ENCODE measurements at regions of chr9 and their contacts with region 1.

Region 1: GRCh38 chr9:6049798-6050197 is 34.4 kb upstream of the RANBP6 start:
- DNase-seq: no peak
- H3K4me3 ChIP-seq: no peak overlapping the region
- H3K27ac ChIP-seq: no peak overlapping the region
- H3K4me1 ChIP-seq: no peaks in the 10 kb centered on the region
- H3K27me3 ChIP-seq: no peaks in the 10 kb centered on the region
- CTCF ChIP-seq: no peak
- EP300 ChIP-seq: no peak
- POLR2A ChIP-seq: no peak

Region 2: DNA sequence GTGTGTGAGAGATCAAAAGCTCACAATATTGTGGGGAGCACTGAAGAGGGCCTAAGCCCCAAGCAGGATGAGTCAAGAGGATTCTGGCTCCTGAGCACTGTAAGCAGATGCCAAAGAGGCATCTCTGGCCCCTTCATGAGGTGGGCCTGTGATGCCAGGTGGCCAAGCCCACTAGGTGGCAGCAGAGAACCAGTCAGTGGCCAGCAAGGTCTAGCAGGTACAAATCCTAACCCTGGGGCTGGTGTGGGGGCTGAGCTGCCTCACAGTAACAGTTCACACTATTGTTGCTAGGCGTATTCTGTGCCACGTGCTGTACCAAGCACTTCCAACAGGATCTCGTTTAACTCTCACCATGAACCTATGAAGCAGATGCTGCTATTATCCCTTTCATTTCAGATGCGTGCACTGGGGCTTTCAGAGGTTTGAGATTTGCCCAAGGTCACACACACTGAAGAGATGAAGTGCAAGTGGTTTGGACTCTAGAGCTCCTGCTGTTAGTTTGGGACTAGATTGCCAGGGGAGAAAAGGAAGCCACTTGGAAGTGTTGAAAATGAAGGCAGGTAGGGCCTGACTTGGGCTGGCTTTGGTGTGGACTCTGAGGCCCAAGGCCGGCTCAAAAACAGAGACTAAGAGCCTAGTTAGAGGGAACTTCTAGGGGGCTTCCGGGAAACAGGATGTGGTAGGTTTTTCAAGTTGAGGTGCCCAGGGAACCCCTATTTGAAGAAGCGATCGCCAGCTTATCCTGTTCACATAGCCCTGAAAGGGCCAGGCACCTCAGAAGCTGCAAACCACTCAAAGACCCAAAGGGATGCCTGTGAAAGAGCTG is 163.5 kb before region 1 on chr9:
- intact Hi-C with region 1: loop called (anchors 5 to 10 kb)
- DNase-seq: peak; percentile 62 to 83 (median 79)
- H3K4me3 ChIP-seq: no peak overlapping the region
- H3K27ac ChIP-seq: no peak overlapping the region
- H3K4me1 ChIP-seq: no peaks in the 10 kb centered on the region
- H3K27me3 ChIP-seq: no peaks in the 10 kb centered on the region
- CTCF ChIP-seq: peak; percentile 62 to 79 (median 68)
- EP300 ChIP-seq: no peak
- POLR2A ChIP-seq: no peak

Region 3: DNA sequence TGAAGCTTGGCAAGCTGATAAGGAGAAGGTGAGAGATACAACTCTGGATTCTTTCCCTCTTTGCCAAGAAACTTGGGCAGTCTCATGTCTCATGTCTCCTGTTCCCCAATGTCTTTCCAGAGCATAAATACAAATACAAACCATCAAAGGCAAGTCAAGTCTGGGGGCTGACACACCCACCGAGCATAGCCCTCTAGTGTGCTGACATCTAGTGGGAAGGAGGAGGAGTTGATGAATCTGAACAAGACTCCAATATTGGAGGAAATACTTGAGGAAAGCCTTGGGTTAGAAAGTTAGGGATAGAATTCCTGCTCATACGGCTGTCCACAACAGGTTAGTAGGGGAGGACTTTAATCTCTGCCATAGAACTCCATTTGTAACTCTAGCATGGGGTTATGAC is 150.5 kb before region 1 on chr9:
- intact Hi-C with region 1: loop called in 1 of 4 experiments (anchors 10 kb)
- DNase-seq: no peak
- H3K4me3 ChIP-seq: no peak overlapping the region
- H3K27ac ChIP-seq: no peak overlapping the region
- H3K4me1 ChIP-seq: no peaks in the 10 kb centered on the region
- H3K27me3 ChIP-seq: no peaks in the 10 kb centered on the region
- CTCF ChIP-seq: no peak
- EP300 ChIP-seq: no peak
- POLR2A ChIP-seq: no peak

Measured in ovary (tissue), 10 donors.